Psoas muscle (tissue), 8 donors: ENCODE measurements at regions of chr2 and their contacts with region 1.

Region 1: DNA sequence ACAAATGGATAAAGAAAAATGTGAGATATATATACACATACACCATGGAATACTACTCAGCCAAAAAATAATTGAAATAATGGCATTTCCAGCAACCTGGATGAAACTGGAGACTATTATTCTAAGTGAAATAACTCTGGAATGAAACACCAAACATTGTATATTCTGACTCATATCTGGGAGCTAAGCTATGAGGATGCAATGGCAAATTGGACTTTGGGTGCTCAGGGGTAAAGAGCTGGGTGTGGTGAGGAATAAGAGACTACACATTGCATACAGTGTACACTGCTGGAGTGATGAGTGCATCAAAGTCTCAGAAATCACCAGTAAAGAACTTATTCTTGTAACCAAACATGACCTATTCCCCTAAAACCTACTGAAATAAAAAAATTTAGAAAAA is 636.0 kb upstream of the LRATD1 start:
- DNase-seq: no peak
- ATAC-seq: no peak
- H3K4me3 ChIP-seq: no peak overlapping the region
- H3K27ac ChIP-seq: no peak overlapping the region
- H3K4me1 ChIP-seq: no peaks in the 10 kb centered on the region
- H3K27me3 ChIP-seq: no peaks in the 10 kb centered on the region
- CTCF ChIP-seq: no peak

Region 2: GRCh38 chr2:14011190-14011589 is 14.7 kb after region 1 on chr2:
- intact Hi-C with region 1: loop called in 1 of 2 experiments (anchors 1 kb)
- DNase-seq: no peak
- ATAC-seq: no peak
- H3K4me3 ChIP-seq: no peak overlapping the region
- H3K27ac ChIP-seq: no peak overlapping the region
- H3K4me1 ChIP-seq: no peaks in the 10 kb centered on the region
- H3K27me3 ChIP-seq: no peaks in the 10 kb centered on the region
- CTCF ChIP-seq: no peak

Region 3: GRCh38 chr2:14601156-14601770 is 604.7 kb after region 1 on chr2:
- intact Hi-C with region 1: no loop called
- DNase-seq: no peak
- ATAC-seq: no peak
- H3K4me3 ChIP-seq: no peak overlapping the region
- H3K27ac ChIP-seq: no peak overlapping the region
- H3K4me1 ChIP-seq: no peaks in the 10 kb centered on the region
- H3K27me3 ChIP-seq: peaks cover 0 to 2% (median 0%) of the 10 kb centered on the region in 3 donors
- CTCF ChIP-seq: no peak